T-cell (primary cell): ENCODE measurements at regions of chr19 and their contacts with region 1.

Region 1: DNA sequence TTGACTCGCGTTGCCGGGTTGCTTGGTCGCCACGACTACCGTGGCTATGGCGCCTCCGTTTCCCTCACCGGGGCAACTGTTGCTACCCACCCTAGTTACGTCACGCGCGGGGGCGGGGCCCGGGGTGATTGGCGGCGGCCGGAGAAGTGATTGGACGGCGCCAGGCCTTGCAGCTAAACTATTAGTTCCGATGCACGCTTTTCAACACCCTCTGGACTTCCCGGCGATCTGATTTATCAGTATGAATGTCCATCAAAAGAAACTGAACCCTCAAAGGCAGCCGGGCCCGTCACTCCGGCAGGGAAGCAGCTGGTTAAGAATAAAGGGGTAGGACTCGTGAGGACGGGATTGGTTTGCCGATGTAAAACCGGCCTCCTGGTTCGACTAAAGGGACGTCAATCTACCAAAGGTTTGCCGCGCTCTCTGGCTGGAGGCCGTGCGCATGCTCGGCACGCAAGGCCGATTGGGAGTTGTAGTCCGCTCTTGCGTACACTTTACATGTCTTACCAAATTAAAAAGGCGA is at the start of gene RFX1:
- DNase-seq: peak; percentile 99 to 100 (median 100)
- ATAC-seq: peak; percentile 77 to 82 (median 80)
- H3K4me3 ChIP-seq: peak within 1 kb of the TSS; percentile 86 to 88
- H3K4me3 Mint-ChIP-seq: peak within 1 kb of the TSS; percentile 82 to 92 (median 91)
- H3K27ac ChIP-seq: peak within 1 kb of the TSS; percentile 100
- H3K27ac Mint-ChIP-seq: peak within 1 kb of the TSS; percentile 97 to 98
- H3K4me1 ChIP-seq: peaks cover 16 to 50% of the 10 kb centered on the region in 2 experiments
- H3K4me1 Mint-ChIP-seq: peaks cover 38 to 54% (median 47%) of the 10 kb centered on the region in 3 donors
- H3K27me3 ChIP-seq: no peaks in the 10 kb centered on the region
- H3K27me3 Mint-ChIP-seq: no peaks in the 10 kb centered on the region
- total RNA-seq, gene RFX1: 18.4 to 27.1 (median 23.1) TPM

Region 2: DNA sequence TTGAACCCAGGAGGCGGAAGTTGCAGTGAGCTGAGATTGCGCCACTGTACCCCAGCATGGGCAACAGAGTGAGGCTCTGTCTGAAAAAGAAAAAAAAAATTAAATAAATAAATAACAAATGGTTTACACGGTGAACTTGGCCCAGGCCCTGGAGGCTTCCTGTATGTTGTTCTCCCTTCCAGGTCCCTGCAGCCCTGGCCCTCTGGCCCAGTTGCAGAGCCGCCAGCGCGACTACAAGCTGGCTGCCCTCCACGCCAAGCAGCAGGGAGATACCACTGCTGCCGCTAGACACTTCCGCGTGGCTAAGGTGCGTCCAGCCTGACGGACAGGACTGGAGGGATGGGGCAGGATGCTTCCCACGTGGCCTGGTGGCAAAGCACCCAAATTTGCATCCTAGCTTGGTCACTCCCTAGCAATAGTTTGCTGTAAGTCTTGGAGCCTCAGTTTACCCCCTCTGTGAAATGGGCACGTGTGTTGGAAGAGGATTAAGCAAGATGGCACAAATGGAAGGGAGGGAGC is 88.4 kb before region 1 on chr19:
- CTCF ChIA-PET with region 1: no interaction called
- POLR2A ChIA-PET with region 1: interaction called in 1 of 2 experiments, 12 read pairs
- DNase-seq: no peak
- ATAC-seq: no peak
- H3K4me3 ChIP-seq: no peak overlapping the region
- H3K4me3 Mint-ChIP-seq: no peak overlapping the region
- H3K27ac ChIP-seq: no peak overlapping the region
- H3K27ac Mint-ChIP-seq: no peak overlapping the region
- H3K4me1 ChIP-seq: no peaks in the 10 kb centered on the region
- H3K4me1 Mint-ChIP-seq: no peaks in the 10 kb centered on the region
- H3K27me3 ChIP-seq: no peaks in the 10 kb centered on the region
- H3K27me3 Mint-ChIP-seq: no peaks in the 10 kb centered on the region

Region 3: DNA sequence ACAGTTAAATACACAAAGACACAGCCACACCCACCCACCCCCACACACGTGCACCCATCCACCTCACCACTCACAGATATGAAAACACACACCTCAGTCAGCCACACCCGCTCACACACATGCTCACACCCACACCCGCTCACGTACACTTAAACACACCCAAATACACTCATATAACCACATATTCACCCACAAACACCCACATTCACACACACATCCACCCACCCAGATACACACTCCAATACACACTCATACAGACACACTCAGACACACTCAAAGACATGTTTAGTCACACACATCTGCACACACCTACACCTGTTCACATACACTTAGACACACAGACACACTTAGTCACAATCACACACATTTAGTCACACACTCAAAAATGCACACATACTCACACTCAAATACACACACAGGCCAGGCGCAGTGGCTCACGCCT is 169.1 kb after region 1 on chr19:
- CTCF ChIA-PET with region 1: no interaction called
- POLR2A ChIA-PET with region 1: no interaction called
- DNase-seq: no peak
- ATAC-seq: no peak
- H3K4me3 ChIP-seq: no peak overlapping the region
- H3K4me3 Mint-ChIP-seq: no peak overlapping the region
- H3K27ac ChIP-seq: no peak overlapping the region
- H3K27ac Mint-ChIP-seq: peak overlapping the region; percentile 49 to 58
- H3K4me1 ChIP-seq: peaks cover 3 to 6% of the 10 kb centered on the region in 2 experiments
- H3K4me1 Mint-ChIP-seq: peaks cover 5 to 14% (median 9%) of the 10 kb centered on the region in 3 donors
- H3K27me3 ChIP-seq: no peaks in the 10 kb centered on the region
- H3K27me3 Mint-ChIP-seq: no peaks in the 10 kb centered on the region